HEK293T (cell line): ENCODE measurements at regions of chr14 and their contacts with region 1.

Region 1: GRCh38 chr14:31950764-31951637 is 126.1 kb upstream of the ARHGAP5 start:
- DNase-seq: peak; percentile 56

Region 2: DNA sequence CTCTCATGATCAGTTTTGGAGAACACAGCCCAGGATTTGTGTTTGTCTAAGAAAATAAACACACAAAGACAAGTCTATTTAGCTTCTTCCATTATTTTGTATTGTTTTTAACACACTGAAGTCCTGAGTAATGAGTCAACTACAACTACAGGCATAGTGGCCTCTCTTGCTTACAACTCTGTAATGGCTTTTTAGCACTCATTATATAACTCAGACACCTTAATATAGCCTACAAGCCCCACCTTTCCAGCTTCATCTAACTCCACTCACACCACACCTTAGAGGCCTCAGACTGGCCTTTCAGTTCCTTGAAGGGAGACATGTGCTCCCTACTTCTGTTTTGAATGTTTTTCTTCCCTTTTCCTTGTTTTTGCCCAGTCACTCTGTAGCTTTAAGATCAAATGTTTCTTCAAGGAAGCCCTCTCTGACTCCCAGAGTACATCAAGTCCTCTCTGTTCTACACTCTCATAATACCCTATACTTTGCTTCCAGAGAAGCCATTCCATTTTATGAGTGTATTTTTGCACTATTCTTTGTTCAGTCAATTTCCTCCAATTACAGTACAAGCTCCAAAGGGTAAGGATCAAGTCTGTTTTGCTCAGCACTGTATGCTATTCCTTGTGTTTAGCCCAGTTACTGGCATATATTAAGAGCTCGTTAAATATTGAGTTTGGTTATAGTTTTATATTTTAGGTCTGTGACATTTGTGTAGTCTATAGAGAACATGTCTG is 107.5 kb before region 1 on chr14:
- CTCF ChIA-PET with region 1: no interaction called
- POLR2A ChIA-PET with region 1: no interaction called
- DNase-seq: no peak

Region 3: DNA sequence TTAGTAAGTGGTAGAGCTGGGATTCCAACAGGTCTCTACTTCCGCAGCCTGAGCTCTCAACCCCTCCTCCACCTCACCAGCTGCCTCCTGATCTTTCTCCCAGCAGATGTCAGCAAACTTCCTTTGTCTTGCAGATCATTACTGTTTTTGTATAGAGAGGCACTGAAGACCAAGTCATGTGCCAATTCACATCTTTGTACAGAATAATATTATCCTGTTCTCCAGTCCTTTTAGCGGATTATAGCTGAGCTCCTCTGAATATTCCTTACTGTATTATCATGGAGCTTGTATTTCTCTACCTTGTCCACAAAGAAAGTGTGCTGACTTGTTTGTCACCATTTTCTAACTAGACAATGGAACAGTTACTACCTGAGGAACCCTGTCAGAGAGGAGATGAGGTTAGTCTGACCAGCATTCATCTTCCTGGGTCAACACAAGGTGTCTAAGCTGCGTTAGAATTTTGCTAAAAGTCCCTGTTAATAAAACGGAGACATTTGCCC is 16.2 kb before region 1 on chr14:
- CTCF ChIA-PET with region 1: interaction called, 15 read pairs
- POLR2A ChIA-PET with region 1: interaction called, 3 read pairs
- DNase-seq: peak; percentile 46